ENCODE measurements at regions of chr2 and their contacts with region 1.

Region 1: DNA sequence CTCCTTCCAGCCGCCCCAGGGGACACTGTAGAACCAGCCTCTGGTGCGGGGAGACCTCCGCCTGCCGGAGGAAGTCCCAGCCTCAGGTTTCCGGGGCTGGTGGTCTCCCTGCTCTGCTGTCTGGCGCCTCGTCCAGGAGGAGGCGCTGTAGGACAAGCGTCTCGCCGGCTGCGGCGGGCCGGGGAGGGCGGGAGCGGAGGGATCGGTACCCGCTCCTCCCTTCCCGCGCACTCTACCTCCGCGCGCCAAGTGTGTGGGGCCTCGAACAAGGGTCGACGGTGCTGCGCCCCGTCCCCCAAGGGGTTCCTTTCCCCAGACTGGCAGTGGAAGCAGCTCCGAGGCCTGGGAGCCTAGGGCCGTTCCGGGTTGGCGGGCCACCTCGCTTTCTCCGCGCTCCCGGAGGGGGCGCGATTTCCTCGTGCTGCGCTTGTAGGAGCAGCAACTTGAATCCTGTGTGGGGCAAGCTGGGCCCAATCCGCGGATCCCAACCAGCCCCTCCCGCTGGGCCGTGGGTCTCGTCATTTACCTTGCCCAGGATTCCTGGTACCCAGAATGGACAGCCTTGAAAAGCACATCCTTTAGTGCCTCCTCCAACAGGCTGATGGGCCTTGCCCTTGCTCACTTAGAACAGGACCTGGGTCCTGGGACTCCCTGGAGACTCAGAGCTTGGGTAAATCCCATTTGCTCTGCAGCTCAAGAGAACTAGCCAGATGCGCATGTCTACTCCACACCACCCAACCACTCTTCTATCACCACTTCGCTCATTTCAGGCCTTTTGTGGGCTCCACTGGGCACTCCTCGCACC is 10.6 kb upstream of the HOXD4 start:
- DNase-seq: no peak
- H3K4me3 ChIP-seq: peak overlapping the region; percentile 71
- CTCF ChIP-seq: peak; percentile 98

Region 2: DNA sequence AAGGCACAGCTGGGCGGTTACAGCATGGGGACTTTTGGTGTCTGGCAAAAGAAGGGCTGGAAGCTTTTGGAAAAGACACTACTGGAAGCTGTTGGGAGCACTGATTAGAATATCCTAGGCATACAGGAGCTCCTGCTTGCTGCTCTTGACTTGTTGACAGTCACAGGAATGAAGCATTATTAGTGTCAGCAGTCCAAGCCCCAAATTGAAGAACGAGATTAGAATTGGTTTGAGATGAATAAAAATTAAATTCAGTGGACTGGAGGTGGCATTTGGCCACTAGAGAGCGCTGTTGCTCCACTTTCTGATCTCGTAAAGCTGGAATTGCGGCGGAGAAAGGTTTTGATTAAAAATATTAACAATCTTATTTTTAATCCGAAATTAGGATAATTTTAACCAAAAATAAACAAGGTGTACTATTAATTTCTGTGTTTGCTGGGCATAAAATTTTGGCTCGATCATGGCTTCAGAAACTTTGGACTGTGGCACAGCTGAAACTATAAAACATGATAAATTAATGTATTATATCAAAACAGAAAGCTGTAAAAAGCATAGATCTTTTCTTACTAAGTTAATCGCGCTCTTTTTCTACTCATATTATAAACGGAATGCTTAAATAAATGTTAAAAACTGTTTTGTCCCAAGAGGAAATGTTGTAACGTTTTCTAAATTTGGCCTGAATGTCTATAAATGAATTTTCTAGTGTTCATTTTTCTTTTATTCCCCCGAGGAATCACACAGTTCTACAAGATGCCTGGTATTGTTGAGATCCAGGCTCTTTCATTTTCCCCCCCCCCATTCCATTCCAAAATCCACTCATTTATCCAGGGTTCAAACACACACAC is 13.6 kb before region 1 on chr2:
- CTCF ChIA-PET with region 1: interaction called, 124 read pairs
- POLR2A ChIA-PET with region 1: interaction called, 7 read pairs
- DNase-seq: no peak
- H3K4me3 ChIP-seq: peak overlapping the region; percentile 13
- CTCF ChIP-seq: peak; percentile 57

Region 3: GRCh38 chr2:176165370-176166050 is 24.8 kb after region 1 on chr2:
- CTCF ChIA-PET with region 1: interaction called, 190 read pairs
- POLR2A ChIA-PET with region 1: interaction called, 5 read pairs
- DNase-seq: no peak
- H3K4me3 ChIP-seq: no peak overlapping the region
- CTCF ChIP-seq: no peak

Region 4: DNA sequence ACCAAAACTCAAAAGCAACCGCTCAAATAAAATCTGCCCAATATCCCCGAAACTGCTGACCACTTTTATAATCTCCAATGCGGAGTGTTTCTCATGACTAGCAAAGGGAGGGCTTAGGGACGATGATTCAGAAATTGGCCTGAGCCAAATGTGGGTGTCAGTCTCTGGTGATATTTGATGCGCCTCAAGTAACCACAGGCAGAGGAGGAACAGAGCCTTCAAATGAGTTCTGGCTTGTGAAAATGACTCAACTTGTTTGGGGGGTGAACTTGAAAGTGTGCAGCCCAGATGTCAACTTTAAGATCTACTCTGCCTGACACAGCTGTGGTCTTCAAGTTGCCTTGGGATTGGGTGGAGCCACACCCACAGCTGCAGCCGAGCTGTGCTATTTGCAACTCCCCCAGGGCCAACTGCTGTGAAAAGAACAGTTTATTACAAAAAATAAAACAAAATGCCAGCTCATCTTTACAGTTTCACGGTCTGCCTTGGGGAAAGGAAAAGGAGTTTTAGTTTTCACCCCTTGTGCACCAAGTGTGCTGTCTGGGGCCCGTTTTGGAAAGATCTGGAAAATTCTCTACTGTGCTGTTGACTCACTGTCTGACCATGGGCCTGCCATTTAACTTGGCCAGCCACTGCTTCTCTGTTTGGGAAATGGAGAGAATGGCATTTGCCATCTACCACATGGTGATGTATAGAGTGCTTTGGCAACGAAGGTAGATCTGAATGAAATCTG is 350.6 kb after region 1 on chr2:
- CTCF ChIA-PET with region 1: interaction called, 16 read pairs
- POLR2A ChIA-PET with region 1: no interaction called
- DNase-seq: peak; percentile 99
- H3K4me3 ChIP-seq: no peak overlapping the region
- CTCF ChIP-seq: no peak

Region 5: GRCh38 chr2:176582990-176583481 is 442.3 kb after region 1 on chr2:
- CTCF ChIA-PET with region 1: interaction called, 20 read pairs
- POLR2A ChIA-PET with region 1: no interaction called
- DNase-seq: peak; percentile 82
- H3K4me3 ChIP-seq: no peak overlapping the region
- CTCF ChIP-seq: no peak

Region 6: DNA sequence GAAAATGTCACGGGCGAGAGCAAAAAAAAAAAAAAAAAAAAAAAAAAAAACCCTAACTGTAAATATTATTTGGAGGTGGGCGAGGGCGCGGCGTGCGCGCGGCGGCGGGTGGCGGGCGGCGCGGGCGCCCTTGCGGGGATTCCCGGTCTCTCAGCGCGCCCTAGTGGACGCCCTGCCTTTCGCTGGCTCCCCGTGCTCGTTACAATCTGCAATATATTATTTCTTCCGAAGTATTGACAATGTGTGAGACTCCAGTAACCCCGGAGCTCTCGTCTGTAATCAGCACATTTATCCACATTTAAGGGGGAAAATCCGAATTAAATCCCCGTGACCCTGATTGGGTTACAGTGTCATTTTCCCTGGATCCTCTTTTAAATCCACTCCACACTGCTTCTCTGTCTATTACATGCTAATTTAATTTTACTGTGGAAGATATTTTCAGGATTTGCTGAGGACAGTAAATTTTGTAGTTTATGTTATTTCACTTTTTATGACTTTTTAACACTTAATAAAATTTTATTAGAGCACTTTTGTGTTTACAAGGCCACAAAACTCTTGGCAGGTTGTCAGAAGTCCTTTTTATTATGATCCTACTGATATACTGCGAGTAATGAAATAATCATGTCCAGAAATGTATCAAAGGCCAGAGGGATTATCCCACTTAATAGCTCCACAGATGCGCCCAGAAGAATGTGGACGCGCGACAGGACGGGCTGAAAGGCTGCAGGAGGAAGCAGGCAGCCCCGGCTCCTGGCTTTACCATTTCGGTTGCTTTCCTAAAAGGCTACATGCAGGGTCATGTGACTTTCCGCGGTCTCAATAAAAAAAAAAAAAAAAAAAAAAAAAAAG is 497.7 kb after region 1 on chr2:
- CTCF ChIA-PET with region 1: interaction called, 1,421 read pairs
- POLR2A ChIA-PET with region 1: interaction called, 9 read pairs
- DNase-seq: no peak
- H3K4me3 ChIP-seq: peak overlapping the region; percentile 66
- CTCF ChIP-seq: peak; percentile 67